Gastrocnemius medialis (tissue), 4 donors: ENCODE measurements at regions of chr2 and their contacts with region 1.

Region 1: DNA sequence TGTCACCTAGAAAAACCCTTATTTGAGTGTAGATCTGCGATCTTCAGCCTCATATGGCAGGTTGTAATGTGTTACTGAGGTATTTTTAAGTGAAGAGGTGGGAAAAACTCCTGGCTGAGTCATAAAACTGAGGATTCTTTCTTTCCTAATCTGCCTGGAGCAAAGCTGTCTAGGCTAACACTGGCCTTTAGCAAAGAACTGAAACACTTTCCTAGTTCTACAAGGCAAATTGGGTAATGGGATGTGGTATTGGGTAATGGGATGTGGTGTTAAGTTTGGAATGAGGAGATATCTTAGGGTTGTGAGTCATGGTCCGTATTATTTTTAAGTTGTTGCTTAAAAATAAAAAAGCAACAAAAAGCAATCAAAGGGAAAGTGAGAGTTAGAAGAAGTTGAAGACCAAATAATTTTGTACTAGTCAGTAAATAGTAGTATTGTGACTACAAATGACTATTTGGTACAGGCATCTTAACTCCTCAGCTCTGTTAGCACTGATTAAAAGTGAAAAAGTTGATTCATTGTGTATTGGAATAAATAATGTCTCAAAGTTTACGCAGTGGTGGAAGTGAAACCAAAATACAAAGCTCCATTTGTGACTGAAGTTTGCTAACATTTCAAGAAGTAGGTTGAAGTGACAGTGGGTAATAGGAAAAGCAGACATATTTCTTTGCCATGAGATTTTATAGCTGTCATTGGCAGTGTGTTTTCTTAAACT is 216.8 kb downstream of the CAMKMT start:
- DNase-seq: no peak
- ATAC-seq: peak; percentile 93 to 99
- H3K4me3 ChIP-seq: peak overlapping the region in 2 of 4 donors; percentile 10 to 28
- H3K27ac ChIP-seq: peak overlapping the region; percentile 56 to 76 (median 64)
- H3K4me1 ChIP-seq: peaks cover 9 to 14% of the 10 kb centered on the region in 2 donors
- H3K27me3 ChIP-seq: no peaks in the 10 kb centered on the region
- CTCF ChIP-seq: no peak
- POLR2A ChIP-seq: no peak

Region 2: DNA sequence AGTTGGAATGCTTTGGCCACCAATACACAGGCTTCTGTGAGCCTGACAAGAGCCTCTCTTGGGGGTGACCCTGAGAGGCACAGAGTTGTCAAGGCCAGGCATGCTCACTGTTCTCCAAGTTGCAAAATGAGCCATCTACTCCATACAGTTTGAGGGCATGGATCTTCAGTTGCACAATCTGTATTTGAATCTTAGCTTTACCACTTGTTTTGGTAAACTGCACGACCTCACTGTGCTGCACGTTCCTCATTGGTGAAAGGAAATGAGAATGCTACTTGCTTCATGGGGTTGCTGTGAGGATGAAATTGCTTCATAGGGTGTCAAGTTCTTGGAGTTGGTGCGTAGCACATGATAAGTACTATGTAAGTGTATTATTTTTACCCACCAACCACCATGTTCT is 1774.2 kb before region 1 on chr2:
- in situ Hi-C with region 1: no loop called
- intact Hi-C with region 1: loop called (anchors 5 kb)
- DNase-seq: peak in 1 of 2 donors; percentile 55
- ATAC-seq: peak; percentile 92 to 95
- H3K4me3 ChIP-seq: no peak overlapping the region
- H3K27ac ChIP-seq: peak overlapping the region; percentile 71 to 78 (median 74)
- H3K4me1 ChIP-seq: peaks cover 23 to 28% of the 10 kb centered on the region in 2 donors
- H3K27me3 ChIP-seq: no peaks in the 10 kb centered on the region
- CTCF ChIP-seq: no peak
- POLR2A ChIP-seq: no peak

Region 3: GRCh38 chr2:44148999-44149398 is 429.6 kb before region 1 on chr2:
- in situ Hi-C with region 1: no loop called
- intact Hi-C with region 1: no loop called
- DNase-seq: no peak
- ATAC-seq: no peak
- H3K4me3 ChIP-seq: no peak overlapping the region
- H3K27ac ChIP-seq: no peak overlapping the region
- H3K4me1 ChIP-seq: no peaks in the 10 kb centered on the region
- H3K27me3 ChIP-seq: no peaks in the 10 kb centered on the region
- CTCF ChIP-seq: no peak
- POLR2A ChIP-seq: no peak

Region 4: DNA sequence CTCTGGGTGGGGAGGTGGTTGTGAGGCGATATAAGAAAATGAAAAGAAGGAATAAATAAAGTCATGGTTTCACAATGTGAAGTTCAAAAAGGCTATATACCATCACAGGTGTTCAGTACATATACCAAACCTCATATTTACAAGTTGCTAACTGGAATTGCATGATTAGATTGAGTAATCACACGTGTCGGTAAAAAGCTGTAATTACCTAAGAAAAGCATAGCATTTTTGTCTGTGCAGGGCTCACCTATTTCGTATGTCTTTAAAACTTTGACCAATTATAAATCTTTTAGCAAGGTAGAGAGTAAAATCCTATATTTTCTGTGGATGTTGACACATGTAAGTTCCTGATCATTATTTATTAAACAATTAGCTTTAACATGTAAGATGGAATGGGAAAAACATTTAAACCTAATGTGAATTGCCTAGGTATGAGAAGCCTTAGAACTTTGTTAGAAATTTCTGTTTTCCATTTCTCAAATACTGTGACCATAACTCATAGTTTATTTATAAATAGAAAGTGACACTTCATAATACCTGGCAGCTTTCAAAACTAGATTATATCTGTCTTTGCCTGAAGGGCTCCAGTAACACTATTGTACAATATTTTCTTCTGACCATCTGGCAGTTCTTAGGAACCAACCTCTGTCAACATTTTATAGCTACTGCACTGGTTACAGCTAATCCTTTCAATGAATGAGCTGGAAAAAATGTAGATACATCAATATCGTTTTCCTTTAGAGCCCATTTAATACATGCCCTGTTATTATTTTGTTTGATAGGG is 20.4 kb after region 1 on chr2:
- in situ Hi-C with region 1: no loop called
- intact Hi-C with region 1: loop called (anchors 2 kb)
- DNase-seq: no peak
- ATAC-seq: peak; percentile 100
- H3K4me3 ChIP-seq: no peak overlapping the region
- H3K27ac ChIP-seq: peak overlapping the region; percentile 31 to 73 (median 57)
- H3K4me1 ChIP-seq: peaks cover 13 to 21% of the 10 kb centered on the region in 2 donors
- H3K27me3 ChIP-seq: no peaks in the 10 kb centered on the region
- CTCF ChIP-seq: no peak
- POLR2A ChIP-seq: no peak